Activated CD4-positive, alpha-beta memory T cell treated with anti-CD3 and anti-CD28 coated beads for 36 hours (primary cell): ENCODE measurements at regions of chr2 and their contacts with region 1.

Region 1: DNA sequence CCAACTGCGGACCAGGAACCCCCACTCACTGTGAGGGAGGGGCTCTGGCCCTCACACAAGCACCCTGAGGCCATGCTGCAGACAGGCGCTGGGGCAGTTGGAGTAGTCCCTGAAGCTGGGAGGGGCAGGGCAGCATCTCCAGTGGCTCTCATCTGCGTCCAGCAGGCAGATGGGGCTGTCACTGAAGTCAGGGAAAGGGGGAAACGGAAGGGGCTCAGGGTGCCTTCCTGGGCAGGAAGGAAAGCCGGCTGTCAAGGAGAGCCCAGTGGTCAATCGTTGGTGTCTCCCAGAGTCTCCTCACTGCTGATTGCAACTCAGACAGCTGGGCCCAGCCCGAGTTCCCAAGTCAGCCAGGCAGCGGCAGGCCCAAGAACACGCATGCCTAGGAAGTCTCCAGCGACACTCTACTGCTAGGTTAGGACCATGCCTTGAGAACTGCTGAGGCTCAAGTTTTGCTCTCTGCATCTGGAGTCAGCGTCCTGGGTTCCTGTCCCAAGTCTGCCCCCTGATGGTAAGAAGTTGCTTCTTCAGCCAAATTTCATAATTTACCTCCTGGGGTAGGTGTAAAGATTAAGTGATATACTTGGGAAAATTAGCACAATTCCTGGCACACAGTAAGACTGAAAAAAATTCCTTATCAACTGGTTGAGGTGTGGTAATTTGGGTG is 27.5 kb upstream of the NMUR1 start:
- DNase-seq: peak; percentile 65
- H3K4me3 Mint-ChIP-seq: no peak overlapping the region
- H3K27ac Mint-ChIP-seq: no peak overlapping the region
- H3K4me1 Mint-ChIP-seq: peaks cover 9% of the 10 kb centered on the region
- H3K27me3 Mint-ChIP-seq: no peaks in the 10 kb centered on the region

Region 2: DNA sequence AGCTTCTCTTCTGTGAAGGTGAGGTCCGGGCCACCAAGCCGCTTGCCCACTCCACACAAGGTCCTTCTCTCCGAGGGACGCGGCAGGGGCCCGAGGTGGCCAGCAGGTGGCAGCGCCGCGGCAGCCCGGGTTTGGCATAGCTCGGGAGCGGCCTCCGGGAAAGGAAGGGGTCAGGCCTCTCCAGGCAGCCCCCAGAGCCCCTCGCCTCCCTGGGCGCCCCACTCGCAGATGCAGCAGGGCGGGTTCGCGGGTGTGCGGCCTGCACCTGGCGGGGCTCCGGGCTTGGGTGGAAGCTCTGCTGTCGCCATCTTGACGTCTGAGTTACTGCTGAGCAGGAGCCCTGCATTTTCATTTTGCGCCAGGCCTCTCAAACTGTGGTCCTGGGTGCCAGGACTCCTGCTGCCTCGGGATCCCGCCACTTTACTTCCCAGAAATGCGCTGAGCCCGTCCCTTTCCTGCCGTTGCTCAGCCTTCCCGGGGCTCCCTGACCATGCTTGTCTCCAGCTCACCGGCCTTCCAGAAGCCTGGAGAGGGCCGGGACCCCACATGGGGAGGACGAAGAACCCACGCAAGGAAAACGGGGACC is 74.8 kb before region 1 on chr2:
- CTCF ChIA-PET with region 1: interaction called, 14 read pairs
- POLR2A ChIA-PET with region 1: no interaction called
- intact Hi-C with region 1: no loop called
- DNase-seq: peak; percentile 84
- H3K4me3 Mint-ChIP-seq: peak overlapping the region; percentile 80
- H3K27ac Mint-ChIP-seq: peak overlapping the region; percentile 88
- H3K4me1 Mint-ChIP-seq: peaks cover 10% of the 10 kb centered on the region
- H3K27me3 Mint-ChIP-seq: no peaks in the 10 kb centered on the region

Region 3: GRCh38 chr2:231519432-231519831 is 38.3 kb before region 1 on chr2:
- CTCF ChIA-PET with region 1: interaction called, 57 read pairs
- POLR2A ChIA-PET with region 1: interaction called, 3 read pairs
- intact Hi-C with region 1: loop called (anchors 1 kb)
- DNase-seq: no peak
- H3K4me3 Mint-ChIP-seq: no peak overlapping the region
- H3K27ac Mint-ChIP-seq: no peak overlapping the region
- H3K4me1 Mint-ChIP-seq: peaks cover 17% of the 10 kb centered on the region
- H3K27me3 Mint-ChIP-seq: no peaks in the 10 kb centered on the region

Region 4: GRCh38 chr2:231530091-231531011 is 27.4 kb before region 1 on chr2 and contains the start of gene NMUR1:
- CTCF ChIA-PET with region 1: interaction called, 76 read pairs
- POLR2A ChIA-PET with region 1: no interaction called
- intact Hi-C with region 1: loop called (anchors 1 kb)
- DNase-seq: peak; percentile 77
- H3K4me3 Mint-ChIP-seq: peak within 1 kb of the TSS; percentile 13
- H3K27ac Mint-ChIP-seq: no peak within 1 kb of the TSS
- H3K4me1 Mint-ChIP-seq: peaks cover 14% of the 10 kb centered on the region
- H3K27me3 Mint-ChIP-seq: peaks cover 13% of the 10 kb centered on the region
- total RNA-seq, gene NMUR1: 0.07 TPM in 1 of 2 experiments, not detected in the other

Region 5: GRCh38 chr2:231545105-231545902 is 12.4 kb before region 1 on chr2:
- CTCF ChIA-PET with region 1: interaction called, 6 read pairs
- POLR2A ChIA-PET with region 1: interaction called, 4 read pairs
- intact Hi-C with region 1: loop called (anchors 2 kb)
- DNase-seq: peak; percentile 87
- H3K4me3 Mint-ChIP-seq: peak overlapping the region; percentile 25
- H3K27ac Mint-ChIP-seq: peak overlapping the region; percentile 83
- H3K4me1 Mint-ChIP-seq: peaks cover 18% of the 10 kb centered on the region
- H3K27me3 Mint-ChIP-seq: no peaks in the 10 kb centered on the region